Gastrocnemius medialis (tissue), 4 donors: ENCODE measurements at regions of chr19 and their contacts with region 1.

Region 1: GRCh38 chr19:42450314-42450934 is 7.7 kb upstream of the CXCL17 start:
- DNase-seq: peak; percentile 37 to 68
- ATAC-seq: peak; percentile 80 to 92
- H3K4me3 ChIP-seq: no peak overlapping the region
- H3K27ac ChIP-seq: peak overlapping the region in 3 of 4 donors; percentile 28 to 49 (median 30)
- H3K4me1 ChIP-seq: no peaks in the 10 kb centered on the region
- H3K27me3 ChIP-seq: peaks cover 0 to 4% (median 0%) of the 10 kb centered on the region in 3 donors
- CTCF ChIP-seq: peak; percentile 74 to 83 (median 79)
- POLR2A ChIP-seq: no peak

Region 2: GRCh38 chr19:42529248-42529764 is 78.9 kb after region 1 on chr19:
- in situ Hi-C with region 1: loop called in 2 of 4 experiments (anchors 5 kb)
- intact Hi-C with region 1: loop called (anchors 1 kb)
- DNase-seq: no peak
- ATAC-seq: peak in 1 of 2 donors; percentile 44
- H3K4me3 ChIP-seq: no peak overlapping the region
- H3K27ac ChIP-seq: peak overlapping the region; percentile 32 to 61 (median 51)
- H3K4me1 ChIP-seq: no peaks in the 10 kb centered on the region
- H3K27me3 ChIP-seq: no peaks in the 10 kb centered on the region
- CTCF ChIP-seq: peak; percentile 28 to 68 (median 60)
- POLR2A ChIP-seq: no peak

Region 3: DNA sequence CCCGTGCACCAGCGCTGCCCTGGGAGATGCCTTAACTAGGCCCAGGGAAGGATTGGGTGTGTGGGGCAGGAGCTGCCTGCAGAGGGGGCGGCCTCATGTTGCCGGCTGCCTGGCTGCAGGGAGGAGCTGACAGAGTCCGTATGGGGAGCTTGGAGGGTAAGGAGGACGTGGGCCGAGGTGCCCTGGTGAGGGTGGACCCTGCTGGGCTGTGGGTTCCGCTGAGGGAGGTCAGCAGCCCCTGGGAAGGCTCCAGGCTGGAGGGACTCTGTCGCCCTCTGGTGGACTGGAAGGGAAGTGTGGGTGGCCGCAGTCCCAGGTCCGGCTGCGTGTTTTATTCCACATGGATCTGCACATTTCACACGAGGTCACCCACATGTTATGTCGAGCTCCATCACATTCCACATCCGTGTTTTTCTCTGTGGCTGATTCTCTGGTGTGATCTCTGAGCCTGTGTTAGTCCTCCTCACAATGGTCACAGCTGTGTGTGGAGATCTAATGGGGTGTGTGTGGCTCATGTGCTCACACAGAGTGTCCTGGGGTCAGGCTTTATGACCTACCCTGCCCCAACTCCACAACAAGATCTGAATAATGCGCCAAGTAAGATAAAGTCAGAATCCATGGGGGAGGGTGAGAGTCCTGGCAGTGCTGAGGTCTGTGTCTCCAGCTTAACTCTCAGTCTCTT is 146.1 kb after region 1 on chr19:
- in situ Hi-C with region 1: no loop called
- intact Hi-C with region 1: no loop called
- DNase-seq: no peak
- ATAC-seq: no peak
- H3K4me3 ChIP-seq: no peak overlapping the region
- H3K27ac ChIP-seq: no peak overlapping the region
- H3K4me1 ChIP-seq: no peaks in the 10 kb centered on the region
- H3K27me3 ChIP-seq: no peaks in the 10 kb centered on the region
- CTCF ChIP-seq: peak; percentile 33 to 81 (median 72)
- POLR2A ChIP-seq: no peak